ENCODE measurements at regions of chr18 and their contacts with region 1.

Region 1: DNA sequence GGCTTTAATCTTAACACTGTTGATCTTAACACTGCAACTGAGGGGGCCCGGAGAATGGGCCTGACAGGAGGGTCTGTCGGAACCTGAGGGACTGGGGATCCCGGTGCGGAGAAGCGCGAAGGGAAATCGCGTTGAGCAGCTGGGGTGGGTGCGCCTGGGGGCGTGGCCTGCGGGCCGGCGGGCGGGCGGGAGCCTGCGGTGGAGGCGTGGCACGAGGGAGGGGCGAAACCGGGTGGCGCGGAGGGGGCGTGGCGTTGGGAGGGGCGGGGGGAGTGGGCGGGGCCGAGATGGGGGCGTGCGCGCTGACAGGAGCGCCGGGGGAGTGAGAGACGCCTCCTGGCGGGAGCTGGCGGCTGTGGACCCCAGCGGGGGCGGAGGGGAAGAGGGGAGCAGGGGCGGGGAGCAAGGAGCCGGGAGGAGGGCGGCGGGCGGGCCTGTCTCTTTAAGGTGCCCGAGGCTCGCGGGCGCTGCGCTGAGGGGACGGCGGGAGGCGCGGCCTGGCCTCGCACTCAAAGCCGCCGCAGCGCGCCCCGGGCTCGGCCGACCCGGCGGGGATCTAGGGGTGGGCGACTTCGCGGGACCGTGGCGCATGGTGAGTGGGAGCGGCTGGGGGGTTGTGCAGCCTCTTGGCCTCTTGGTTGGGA is at the start of gene TWSG1:
- H3K4me3 ChIP-seq: peak within 1 kb of the TSS; percentile 70
- H3K27ac ChIP-seq: peak within 1 kb of the TSS; percentile 71
- H3K4me1 ChIP-seq: no peaks in the 10 kb centered on the region
- CTCF ChIP-seq: no peak; the same call in 1 of the 2 replicates

Region 2: GRCh38 chr18:8847066-8847755 is 487.2 kb before region 1 on chr18:
- CTCF ChIA-PET with region 1: no interaction called
- POLR2A ChIA-PET with region 1: no interaction called
- H3K4me3 ChIP-seq: no peak overlapping the region
- H3K27ac ChIP-seq: no peak overlapping the region
- H3K4me1 ChIP-seq: no peaks in the 10 kb centered on the region
- CTCF ChIP-seq: no peak

Region 3: GRCh38 chr18:9417073-9417841 is 82.8 kb after region 1 on chr18:
- CTCF ChIA-PET with region 1: no interaction called
- POLR2A ChIA-PET with region 1: interaction called, 10 read pairs
- H3K4me3 ChIP-seq: peak overlapping the region; percentile 6; the same call in 1 of the 2 replicates
- H3K27ac ChIP-seq: no peak overlapping the region; the same call in 1 of the 2 replicates
- H3K4me1 ChIP-seq: peaks cover 5% of the 10 kb centered on the region
- CTCF ChIP-seq: no peak

Measured in HEK293 (cell line).